HEK293T (cell line): ENCODE measurements at regions of chr9 and their contacts with region 1.

Region 1: GRCh38 chr9:95666096-95666784 is 149.5 kb upstream of the PTCH1 start:
- DNase-seq: no peak

Region 2: GRCh38 chr9:96129702-96130101 is 463.5 kb after region 1 on chr9:
- CTCF ChIA-PET with region 1: interaction called, 10 read pairs
- POLR2A ChIA-PET with region 1: no interaction called
- DNase-seq: no peak